ENCODE measurements at regions of chr4 and their contacts with region 1.

Region 1: DNA sequence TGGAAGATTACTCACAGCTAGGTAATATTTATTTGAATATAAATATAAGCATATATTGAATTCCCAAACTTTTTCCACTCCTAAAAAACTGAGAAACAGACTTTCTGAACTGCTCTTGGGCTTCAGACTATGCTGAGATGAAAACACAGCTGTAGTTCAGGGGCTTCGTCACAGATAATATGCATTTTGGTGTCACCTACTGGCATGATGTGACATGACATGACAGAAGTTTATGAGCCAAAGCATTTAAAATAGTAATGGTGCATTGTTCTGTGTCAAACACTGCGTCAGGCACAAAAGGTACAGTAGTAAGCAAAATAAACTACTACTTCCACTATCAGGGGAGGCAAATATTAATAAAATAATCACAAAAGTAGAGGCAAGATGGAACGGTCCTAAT is 171.3 kb downstream of the BTC start:
- DNase-seq: no peak
- ATAC-seq: peak in 2 of 8 donors; percentile 65 to 69
- H3K4me3 ChIP-seq: no peak overlapping the region
- H3K27ac ChIP-seq: no peak overlapping the region
- H3K4me1 ChIP-seq: peaks cover 0 to 30% (median 5%) of the 10 kb centered on the region in 9 donors
- H3K27me3 ChIP-seq: no peaks in the 10 kb centered on the region
- CTCF ChIP-seq: peak; percentile 10 to 58 (median 43)

Region 2: GRCh38 chr4:74531963-74532794 is 90.9 kb before region 1 on chr4:
- intact Hi-C with region 1: loop called in 2 of 10 experiments (anchors 10 kb)
- DNase-seq: no peak
- ATAC-seq: peak in 5 of 8 donors; percentile 40 to 72 (median 68)
- H3K4me3 ChIP-seq: no peak overlapping the region
- H3K27ac ChIP-seq: no peak overlapping the region
- H3K4me1 ChIP-seq: peaks cover 0 to 21% (median 7%) of the 10 kb centered on the region in 9 donors
- H3K27me3 ChIP-seq: peaks cover 0 to 5% (median 0%) of the 10 kb centered on the region in 7 donors
- CTCF ChIP-seq: peak; percentile 9 to 72 (median 60)